WTC11 (cell line): ENCODE measurements at regions of chr1 and their contacts with region 1.

Region 1: GRCh38 chr1:203057911-203058675 is 27.7 kb downstream of the MYOG start:
- DNase-seq: no peak
- ATAC-seq: no peak
- H3K4me3 Mint-ChIP-seq: no peak overlapping the region
- H3K27ac Mint-ChIP-seq: no peak overlapping the region
- H3K4me1 Mint-ChIP-seq: peaks cover 34% of the 10 kb centered on the region
- H3K27me3 Mint-ChIP-seq: no peaks in the 10 kb centered on the region
- CTCF ChIP-seq: no peak

Region 2: GRCh38 chr1:203046984-203047630 is 11.0 kb before region 1 on chr1:
- CTCF ChIA-PET with region 1: interaction called, 412 read pairs
- POLR2A ChIA-PET with region 1: no interaction called
- DNase-seq: no peak
- ATAC-seq: no peak
- H3K4me3 Mint-ChIP-seq: no peak overlapping the region
- H3K27ac Mint-ChIP-seq: no peak overlapping the region
- H3K4me1 Mint-ChIP-seq: peaks cover 20% of the 10 kb centered on the region
- H3K27me3 Mint-ChIP-seq: no peaks in the 10 kb centered on the region; the same call in 1 of the 2 replicates
- CTCF ChIP-seq: no peak

Region 3: GRCh38 chr1:203069030-203069747 is 11.1 kb after region 1 on chr1:
- CTCF ChIA-PET with region 1: interaction called, 18 read pairs
- POLR2A ChIA-PET with region 1: no interaction called
- DNase-seq: no peak
- ATAC-seq: no peak
- H3K4me3 Mint-ChIP-seq: no peak overlapping the region
- H3K27ac Mint-ChIP-seq: no peak overlapping the region
- H3K4me1 Mint-ChIP-seq: peaks cover 9% of the 10 kb centered on the region
- H3K27me3 Mint-ChIP-seq: peaks cover 2% of the 10 kb centered on the region; the same call in 1 of the 2 replicates
- CTCF ChIP-seq: no peak